ENCODE measurements at regions of chr9 and their contacts with region 1.

Region 1: DNA sequence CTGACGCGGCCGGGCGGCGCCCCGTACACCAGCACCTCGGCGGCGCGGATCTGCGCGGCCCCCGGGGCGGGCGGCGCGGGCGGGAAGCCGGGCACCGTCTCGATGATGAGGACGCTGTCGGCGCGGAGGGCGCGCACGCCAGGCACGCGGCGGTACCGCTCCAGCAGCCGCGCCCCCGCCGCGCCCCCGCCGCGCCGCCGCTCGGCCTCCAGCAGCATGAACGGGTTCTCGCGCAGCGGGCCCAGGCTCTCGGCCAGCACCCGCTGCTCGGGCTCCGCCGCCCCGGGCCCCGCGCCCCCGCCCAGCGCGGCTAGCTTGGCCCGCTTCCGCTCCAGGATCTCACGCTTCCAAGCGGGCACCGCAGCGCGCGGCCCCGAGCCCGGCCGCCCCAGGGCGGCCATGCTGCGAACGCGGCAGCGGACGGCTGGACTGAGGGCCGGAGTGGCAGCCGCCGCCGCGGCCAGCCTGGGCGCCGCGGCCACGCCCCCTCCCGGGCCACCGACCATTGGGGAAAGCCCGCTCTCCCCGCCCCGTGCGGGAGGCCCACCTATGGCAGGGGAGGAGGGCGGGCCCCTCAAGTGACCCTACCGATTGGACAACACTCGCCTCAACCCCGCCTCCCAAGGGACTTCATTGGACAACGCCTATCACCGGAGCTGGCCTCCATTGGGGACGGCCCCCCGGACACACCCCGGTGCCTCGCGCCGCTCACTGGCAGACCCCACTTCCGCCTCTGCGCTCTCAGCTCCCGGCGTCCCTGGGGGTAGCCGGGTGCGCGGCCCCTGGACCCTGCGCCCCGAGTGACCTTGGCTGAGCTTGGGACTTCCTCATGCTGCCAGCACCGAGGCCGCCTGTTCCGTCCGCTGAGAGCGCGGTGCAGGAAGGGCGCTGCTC is at the start of gene TPRN:
- DNase-seq: peak; percentile 99

Region 2: DNA sequence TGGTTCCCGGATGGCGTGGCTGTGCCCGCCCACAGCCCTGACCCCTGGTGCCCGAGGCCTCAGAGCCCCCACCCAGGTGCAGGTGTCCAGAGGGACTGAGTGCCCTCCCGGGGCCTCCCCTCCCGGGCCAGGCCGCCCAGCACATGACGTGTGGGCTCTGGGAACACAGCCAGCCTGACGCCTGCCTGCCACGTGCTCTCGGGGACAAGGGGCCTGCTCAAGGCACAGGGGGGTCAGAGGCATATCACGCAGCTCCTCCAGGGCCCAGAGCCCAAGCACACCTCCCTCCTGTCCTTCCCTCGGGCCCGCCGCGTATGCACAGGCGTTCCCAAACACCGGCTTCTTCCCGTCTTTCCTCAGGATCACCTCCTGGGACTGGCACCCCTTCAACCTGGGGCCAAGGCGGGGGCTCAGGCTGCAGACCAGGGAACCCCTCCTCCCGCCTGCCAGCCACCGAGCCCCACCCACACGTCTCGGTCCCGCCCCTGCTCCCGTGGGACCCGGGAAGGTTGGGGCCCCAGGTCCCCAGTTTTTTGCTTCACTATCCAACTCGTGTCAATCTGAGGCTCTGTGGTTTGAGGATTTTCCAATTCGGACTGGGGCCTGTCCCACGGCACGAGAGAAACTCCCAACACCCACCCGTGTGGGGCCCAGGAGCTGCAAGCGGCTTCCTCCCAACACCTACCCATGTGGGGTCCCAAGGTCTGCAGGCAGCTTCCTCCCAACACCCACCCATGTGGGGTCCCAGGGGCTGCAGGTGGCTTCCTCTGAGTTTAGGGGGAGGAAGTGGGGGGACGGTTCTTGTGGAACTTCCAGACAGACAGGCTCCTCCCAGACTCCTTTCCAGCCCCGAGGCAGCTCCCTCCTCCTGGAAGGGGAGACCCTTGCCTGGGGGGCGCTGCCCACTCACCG is 459.3 kb before region 1 on chr9:
- CTCF ChIA-PET with region 1: no interaction called
- POLR2A ChIA-PET with region 1: no interaction called
- DNase-seq: no peak

Region 3: DNA sequence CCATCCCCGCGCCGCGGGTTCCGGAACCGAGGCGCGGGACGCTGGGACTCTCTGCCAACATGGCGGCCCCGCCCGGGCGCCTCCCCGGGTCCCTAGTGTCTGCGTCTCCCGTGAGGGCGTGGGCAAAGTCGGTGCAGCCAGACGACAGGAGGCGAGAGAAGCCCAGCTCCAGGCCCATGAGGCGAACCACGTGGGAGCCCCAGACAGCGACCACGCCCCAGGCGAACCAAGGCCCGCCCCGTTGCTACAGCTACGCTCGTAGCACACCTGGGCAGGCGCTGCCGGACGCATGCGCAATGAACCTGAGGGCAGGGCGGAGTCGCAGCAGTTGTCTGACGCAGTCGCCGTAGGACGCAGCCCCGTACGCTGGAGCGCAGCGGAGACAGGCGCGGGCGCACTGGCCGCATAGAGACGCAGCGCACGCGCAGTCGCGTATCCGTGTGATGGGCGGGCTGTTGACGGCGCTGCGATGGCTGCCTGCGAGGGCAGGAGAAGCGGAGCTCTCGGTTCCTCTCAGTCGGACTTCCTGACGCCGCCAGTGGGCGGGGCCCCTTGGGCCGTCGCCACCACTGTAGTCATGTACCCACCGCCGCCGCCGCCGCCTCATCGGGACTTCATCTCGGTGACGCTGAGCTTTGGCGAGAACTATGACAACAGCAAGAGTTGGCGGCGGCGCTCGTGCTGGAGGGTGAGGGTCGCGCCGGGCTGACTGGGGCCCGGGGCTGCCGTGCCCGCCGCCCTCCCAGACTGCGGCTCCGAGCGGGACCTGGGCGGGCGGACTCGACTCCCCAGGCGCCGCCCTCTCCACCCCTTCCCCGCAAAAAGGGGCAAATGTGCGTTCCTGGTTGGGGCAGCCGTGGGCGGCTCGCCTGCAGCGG is 113.8 kb before region 1 on chr9 and contains the start of gene MAN1B1:
- CTCF ChIA-PET with region 1: no interaction called
- POLR2A ChIA-PET with region 1: no interaction called
- DNase-seq: peak; percentile 99

Region 4: GRCh38 chr9:137123468-137123837 is 77.1 kb before region 1 on chr9:
- CTCF ChIA-PET with region 1: no interaction called
- POLR2A ChIA-PET with region 1: no interaction called
- DNase-seq: no peak

Region 5: DNA sequence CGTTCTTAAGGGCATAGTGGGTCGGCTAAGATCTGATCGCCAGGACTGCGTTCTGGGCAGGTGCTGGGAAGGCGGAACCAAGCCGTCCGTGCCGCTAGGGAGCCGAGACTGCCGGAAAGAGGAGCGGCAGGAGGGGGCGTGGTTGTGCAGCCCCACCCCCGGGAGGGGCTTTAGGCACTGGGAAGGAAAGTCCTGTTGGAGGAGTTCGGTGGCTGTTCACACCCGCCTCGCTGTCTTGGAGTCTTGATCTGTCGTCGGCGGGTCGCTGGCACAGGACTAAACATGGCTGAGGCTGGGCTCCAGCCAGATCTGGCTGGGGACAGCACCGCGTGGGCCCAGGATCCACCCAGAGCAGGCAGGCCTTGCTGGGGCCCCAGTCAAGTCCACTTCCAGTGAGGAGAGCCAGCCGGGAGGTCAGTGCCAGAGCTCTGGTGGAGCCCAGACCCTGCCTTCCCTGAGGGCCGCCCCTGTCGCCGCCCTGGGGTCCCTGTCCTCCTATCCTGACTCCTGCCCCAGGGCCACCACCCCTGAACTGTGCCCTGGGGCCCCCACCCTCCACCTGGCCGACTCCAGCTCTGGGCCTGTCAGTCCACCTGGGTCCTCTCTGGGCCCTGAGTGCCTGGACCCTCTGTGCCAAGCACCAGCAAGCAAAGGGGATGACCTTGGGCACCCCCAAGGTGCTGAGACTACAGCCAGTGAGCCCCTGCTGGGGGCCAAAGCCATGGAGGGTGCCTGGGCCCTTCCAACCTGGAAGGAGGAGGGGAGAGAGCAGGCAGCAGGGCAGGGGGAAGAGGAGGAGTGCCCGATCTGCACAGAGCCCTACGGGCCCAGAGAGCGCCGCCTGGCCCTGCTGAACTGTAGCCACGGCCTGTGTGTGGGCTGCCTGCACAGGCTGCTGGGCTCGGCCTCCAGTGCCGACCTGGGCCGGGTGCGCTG is 17.0 kb after region 1 on chr9:
- CTCF ChIA-PET with region 1: no interaction called
- POLR2A ChIA-PET with region 1: interaction called, 16 read pairs
- DNase-seq: peak; percentile 55

Region 6: DNA sequence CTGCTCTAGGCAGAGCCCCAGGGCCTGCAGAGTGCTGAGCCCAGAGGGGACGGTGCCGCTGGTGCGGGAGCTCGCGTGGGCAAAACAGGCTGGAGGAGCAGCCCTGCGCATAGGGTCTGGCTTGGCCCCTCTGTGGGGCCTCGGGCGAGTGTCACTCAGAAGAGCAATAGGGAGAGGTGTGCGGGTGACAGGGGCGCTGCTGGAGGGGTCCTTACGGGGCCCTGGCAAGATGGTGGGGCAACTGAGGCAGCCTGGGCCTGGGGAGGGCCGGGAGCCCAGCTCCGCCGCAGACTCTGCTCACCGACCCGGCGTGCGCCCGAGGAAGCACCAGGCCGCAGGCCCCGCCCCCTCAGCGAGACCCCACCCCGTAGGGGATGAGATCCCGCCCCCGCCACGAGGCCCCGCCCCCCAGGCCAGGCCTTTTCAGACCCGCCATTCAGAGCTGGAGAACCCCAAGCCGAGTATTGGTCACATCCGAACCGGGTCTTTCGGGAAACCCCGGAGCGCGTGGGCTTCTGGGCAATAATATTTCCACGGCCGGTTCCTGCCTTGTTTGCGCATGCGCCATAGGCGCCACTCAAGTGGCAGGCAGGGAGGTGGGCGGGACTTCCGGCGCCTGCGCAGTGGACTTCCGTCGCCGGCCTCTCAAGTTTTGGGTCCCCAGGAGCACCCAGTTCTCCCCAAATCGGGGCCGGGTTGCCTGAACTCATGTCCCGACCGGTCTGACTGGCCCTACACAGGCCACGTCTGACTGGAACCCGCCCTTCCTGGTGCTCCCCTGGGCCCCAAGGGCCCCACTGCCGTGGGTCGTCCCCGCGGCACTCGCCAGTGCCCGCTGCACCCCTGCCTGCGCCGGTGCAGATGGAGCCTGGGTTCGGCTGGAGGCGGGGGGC is 22.8 kb after region 1 on chr9:
- CTCF ChIA-PET with region 1: no interaction called
- POLR2A ChIA-PET with region 1: interaction called, 14 read pairs
- DNase-seq: peak; percentile 95